ENCODE measurements at regions of chr19 and their contacts with region 1.

Region 1: GRCh38 chr19:1767464-1767933 is 14.2 kb downstream of the ONECUT3 start:
- DNase-seq: peak; percentile 66
- ATAC-seq: peak; percentile 80
- H3K4me3 Mint-ChIP-seq: no peak overlapping the region
- H3K27ac Mint-ChIP-seq: no peak overlapping the region
- H3K4me1 Mint-ChIP-seq: peaks cover 2% of the 10 kb centered on the region
- H3K27me3 Mint-ChIP-seq: peaks cover 69% of the 10 kb centered on the region
- CTCF ChIP-seq: peak; percentile 95

Region 2: DNA sequence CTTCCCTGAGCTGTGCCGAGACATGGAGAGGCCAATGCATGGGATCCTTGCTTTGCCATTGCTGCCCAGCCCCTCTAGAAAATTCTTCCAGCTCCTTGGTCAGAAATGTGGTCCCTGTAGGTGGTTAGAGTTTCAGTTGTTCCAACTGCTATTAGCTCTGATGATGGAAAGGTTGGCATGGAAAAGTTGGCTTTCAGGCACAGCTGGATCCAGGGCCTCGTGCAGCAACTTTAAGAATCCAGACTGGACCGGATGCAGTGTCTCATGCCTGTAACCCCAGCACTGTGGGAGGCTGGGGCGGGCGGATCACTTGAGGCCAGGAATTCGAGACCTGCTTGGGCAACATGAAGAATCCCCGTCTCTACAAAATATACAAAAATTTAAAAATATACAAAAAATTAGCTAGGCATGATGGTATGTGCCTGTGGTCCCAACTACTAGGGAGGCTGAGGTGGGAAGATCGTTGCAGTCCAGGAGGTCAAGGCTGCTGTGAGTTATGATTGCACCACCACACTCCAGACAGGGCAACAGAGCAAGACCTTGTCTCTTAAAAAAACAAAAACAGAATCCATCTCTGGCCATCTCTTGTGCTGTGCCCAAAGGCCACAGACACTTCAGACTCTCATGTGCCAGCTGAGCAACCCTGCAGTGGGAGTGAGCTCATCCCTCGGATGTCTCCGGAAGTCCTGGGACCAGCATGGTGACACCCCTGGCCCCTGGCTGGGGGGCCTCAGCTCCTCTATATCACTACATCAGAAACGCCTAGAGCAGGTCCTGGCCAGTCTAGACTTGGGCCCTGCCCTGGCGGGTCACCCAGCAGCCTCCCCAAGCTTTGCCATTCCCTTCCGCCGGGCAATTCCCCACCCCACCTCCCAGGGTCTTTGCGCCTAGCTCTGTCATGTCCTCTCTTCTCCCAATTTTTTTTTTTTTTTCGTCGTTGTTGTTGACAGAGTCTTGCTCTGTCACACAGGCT is 216.1 kb before region 1 on chr19:
- CTCF ChIA-PET with region 1: interaction called, 10 read pairs
- POLR2A ChIA-PET with region 1: no interaction called
- intact Hi-C with region 1: no loop called
- DNase-seq: no peak
- ATAC-seq: no peak
- H3K4me3 Mint-ChIP-seq: no peak overlapping the region
- H3K27ac Mint-ChIP-seq: no peak overlapping the region
- H3K4me1 Mint-ChIP-seq: no peaks in the 10 kb centered on the region
- H3K27me3 Mint-ChIP-seq: peaks cover 6% of the 10 kb centered on the region
- CTCF ChIP-seq: no peak

Region 3: GRCh38 chr19:1605236-1606137 is 162.0 kb before region 1 on chr19 and contains the start of gene UQCR11:
- CTCF ChIA-PET with region 1: no interaction called
- POLR2A ChIA-PET with region 1: no interaction called
- intact Hi-C with region 1: loop called (anchors 5 kb)
- DNase-seq: peak; percentile 97
- ATAC-seq: peak; percentile 90
- H3K4me3 Mint-ChIP-seq: peak within 1 kb of the TSS; percentile 85
- H3K27ac Mint-ChIP-seq: peak within 1 kb of the TSS; percentile 97
- H3K4me1 Mint-ChIP-seq: peaks cover 38% of the 10 kb centered on the region
- H3K27me3 Mint-ChIP-seq: no peaks in the 10 kb centered on the region
- CTCF ChIP-seq: peak; percentile 48
- total RNA-seq, gene UQCR11: 231 TPM

Region 4: DNA sequence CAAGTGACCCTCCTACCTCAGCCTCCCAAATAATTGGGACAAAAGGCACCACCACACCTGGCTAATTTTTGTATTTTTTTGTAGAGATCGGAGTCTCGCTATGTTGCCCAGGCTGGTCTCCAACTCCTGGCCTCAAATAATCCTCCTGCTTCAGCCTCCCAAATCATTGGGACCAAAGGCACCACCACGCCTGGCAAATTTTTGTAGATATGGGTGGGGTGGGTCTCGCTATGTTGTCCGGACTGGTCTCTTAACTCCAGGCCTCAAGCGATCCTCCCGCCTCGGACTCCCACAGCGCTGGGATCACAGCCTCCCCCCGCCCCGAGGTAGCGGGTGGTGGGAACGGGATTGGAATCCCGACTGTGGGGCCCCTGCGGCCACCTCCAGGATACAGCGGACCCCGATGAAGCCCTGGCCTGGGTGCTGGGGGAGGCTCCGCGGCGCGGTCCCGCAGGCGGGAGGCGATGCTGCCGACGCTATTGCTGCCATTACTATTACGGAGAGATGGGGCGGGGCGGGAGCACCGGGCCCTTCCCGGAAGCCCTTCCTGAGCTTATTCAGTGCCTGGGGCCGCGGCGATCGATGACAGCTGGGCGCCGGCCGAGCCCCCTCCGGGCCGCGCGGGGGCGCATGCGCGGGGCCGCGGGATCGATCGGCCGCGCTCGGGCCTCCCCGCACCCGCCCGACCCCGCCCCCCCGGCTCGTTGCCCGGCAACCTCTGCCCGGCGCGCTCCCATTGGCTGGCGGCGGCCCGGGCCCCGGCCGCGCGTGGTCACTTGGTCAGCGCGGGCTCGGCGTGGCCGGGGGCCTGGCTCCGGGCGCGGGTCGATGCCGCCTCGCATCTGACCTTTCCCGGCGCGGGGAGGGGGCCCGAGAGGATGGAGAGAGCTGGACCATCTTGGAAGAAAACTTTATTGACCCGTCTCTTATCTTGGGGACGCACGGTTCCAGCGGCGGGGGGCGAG is 42.1 kb before region 1 on chr19:
- CTCF ChIA-PET with region 1: no interaction called
- POLR2A ChIA-PET with region 1: no interaction called
- intact Hi-C with region 1: no loop called
- DNase-seq: peak; percentile 61
- ATAC-seq: peak; percentile 93
- H3K4me3 Mint-ChIP-seq: peak overlapping the region; percentile 32
- H3K27ac Mint-ChIP-seq: no peak overlapping the region
- H3K4me1 Mint-ChIP-seq: peaks cover 3% of the 10 kb centered on the region
- H3K27me3 Mint-ChIP-seq: peaks cover 47% of the 10 kb centered on the region
- CTCF ChIP-seq: no peak

Region 5: GRCh38 chr19:1739960-1740629 is 27.4 kb before region 1 on chr19:
- CTCF ChIA-PET with region 1: no interaction called
- POLR2A ChIA-PET with region 1: no interaction called
- intact Hi-C with region 1: no loop called
- DNase-seq: no peak
- ATAC-seq: no peak
- H3K4me3 Mint-ChIP-seq: no peak overlapping the region
- H3K27ac Mint-ChIP-seq: no peak overlapping the region
- H3K4me1 Mint-ChIP-seq: no peaks in the 10 kb centered on the region
- H3K27me3 Mint-ChIP-seq: peaks cover 21% of the 10 kb centered on the region
- CTCF ChIP-seq: no peak

Region 6: GRCh38 chr19:1754616-1755466 is 12.7 kb before region 1 on chr19:
- CTCF ChIA-PET with region 1: interaction called, 12 read pairs
- POLR2A ChIA-PET with region 1: interaction called, 4 read pairs
- intact Hi-C with region 1: no loop called
- DNase-seq: peak; percentile 39
- ATAC-seq: no peak
- H3K4me3 Mint-ChIP-seq: peak overlapping the region; percentile 32
- H3K27ac Mint-ChIP-seq: no peak overlapping the region
- H3K4me1 Mint-ChIP-seq: peaks cover 9% of the 10 kb centered on the region
- H3K27me3 Mint-ChIP-seq: peaks cover 70% of the 10 kb centered on the region
- CTCF ChIP-seq: no peak

Region 7: GRCh38 chr19:1780272-1780958 is 12.9 kb after region 1 on chr19:
- CTCF ChIA-PET with region 1: interaction called, 26 read pairs
- POLR2A ChIA-PET with region 1: interaction called, 4 read pairs
- intact Hi-C with region 1: no loop called
- DNase-seq: no peak
- ATAC-seq: peak; percentile 30
- H3K4me3 Mint-ChIP-seq: no peak overlapping the region
- H3K27ac Mint-ChIP-seq: no peak overlapping the region
- H3K4me1 Mint-ChIP-seq: peaks cover 2% of the 10 kb centered on the region
- H3K27me3 Mint-ChIP-seq: peaks cover 38% of the 10 kb centered on the region
- CTCF ChIP-seq: no peak

Region 8: GRCh38 chr19:1794424-1795172 is 27.1 kb after region 1 on chr19:
- CTCF ChIA-PET with region 1: interaction called, 16 read pairs
- POLR2A ChIA-PET with region 1: no interaction called
- intact Hi-C with region 1: no loop called
- DNase-seq: peak; percentile 43
- ATAC-seq: peak; percentile 34
- H3K4me3 Mint-ChIP-seq: no peak overlapping the region
- H3K27ac Mint-ChIP-seq: no peak overlapping the region
- H3K4me1 Mint-ChIP-seq: peaks cover 8% of the 10 kb centered on the region
- H3K27me3 Mint-ChIP-seq: peaks cover 6% of the 10 kb centered on the region
- CTCF ChIP-seq: no peak

Measured in activated CD8-positive, alpha-beta T cell treated with anti-CD3 and anti-CD28 coated beads for 36 hours (primary cell).